ENCODE measurements at regions of chr14 and their contacts with region 1.

Region 1: GRCh38 chr14:69726761-69727511 is 40.0 kb upstream of the SRSF5 start:
- DNase-seq: peak; percentile 95
- H3K4me3 ChIP-seq: peak overlapping the region; percentile 49 to 63 (median 50)
- H3K27ac ChIP-seq: peak overlapping the region; percentile 49 to 68 (median 60)
- H3K4me1 ChIP-seq: peaks cover 10 to 22% (median 17%) of the 10 kb centered on the region in 4 donors
- H3K27me3 ChIP-seq: no peaks in the 10 kb centered on the region
- CTCF ChIP-seq: peak; percentile 96 to 98 (median 98)
- EP300 ChIP-seq: no peak
- POLR2A ChIP-seq: no peak

Region 2: DNA sequence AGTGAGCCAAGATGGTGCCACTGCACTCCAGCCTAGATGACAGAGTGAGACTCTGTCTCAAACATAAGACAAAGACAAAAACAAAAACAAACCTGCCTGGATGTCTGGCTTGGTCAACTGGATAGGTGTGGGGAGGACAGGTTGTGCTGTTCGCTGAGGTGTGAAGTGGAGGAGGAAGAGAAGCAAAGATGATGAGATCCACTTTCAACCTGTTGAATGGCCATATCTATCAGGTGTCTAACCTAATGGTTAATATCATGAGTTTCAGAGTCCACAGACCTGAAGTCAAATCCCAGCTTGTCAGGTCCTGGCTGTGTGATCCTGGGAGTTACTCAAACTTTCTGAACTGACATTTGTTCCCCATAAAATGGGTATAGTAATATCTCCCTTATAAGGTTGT is 142.5 kb before region 1 on chr14:
- intact Hi-C with region 1: loop called (anchors 2 kb)
- DNase-seq: no peak
- H3K4me3 ChIP-seq: no peak overlapping the region
- H3K27ac ChIP-seq: no peak overlapping the region
- H3K4me1 ChIP-seq: peaks cover 0 to 13% (median 10%) of the 10 kb centered on the region in 4 donors
- H3K27me3 ChIP-seq: no peaks in the 10 kb centered on the region
- CTCF ChIP-seq: no peak
- EP300 ChIP-seq: no peak
- POLR2A ChIP-seq: no peak

Region 3: GRCh38 chr14:69637503-69638030 is 89.4 kb before region 1 on chr14:
- intact Hi-C with region 1: no loop called
- DNase-seq: no peak
- H3K4me3 ChIP-seq: no peak overlapping the region
- H3K27ac ChIP-seq: peak overlapping the region; percentile 50 to 66 (median 58)
- H3K4me1 ChIP-seq: peaks cover 65 to 76% (median 71%) of the 10 kb centered on the region in 4 donors
- H3K27me3 ChIP-seq: no peaks in the 10 kb centered on the region
- CTCF ChIP-seq: no peak
- EP300 ChIP-seq: no peak
- POLR2A ChIP-seq: no peak

Measured in esophagus muscularis mucosa (tissue), 4 donors.